ENCODE measurements at regions of chr19 and their contacts with region 1.

Region 1: DNA sequence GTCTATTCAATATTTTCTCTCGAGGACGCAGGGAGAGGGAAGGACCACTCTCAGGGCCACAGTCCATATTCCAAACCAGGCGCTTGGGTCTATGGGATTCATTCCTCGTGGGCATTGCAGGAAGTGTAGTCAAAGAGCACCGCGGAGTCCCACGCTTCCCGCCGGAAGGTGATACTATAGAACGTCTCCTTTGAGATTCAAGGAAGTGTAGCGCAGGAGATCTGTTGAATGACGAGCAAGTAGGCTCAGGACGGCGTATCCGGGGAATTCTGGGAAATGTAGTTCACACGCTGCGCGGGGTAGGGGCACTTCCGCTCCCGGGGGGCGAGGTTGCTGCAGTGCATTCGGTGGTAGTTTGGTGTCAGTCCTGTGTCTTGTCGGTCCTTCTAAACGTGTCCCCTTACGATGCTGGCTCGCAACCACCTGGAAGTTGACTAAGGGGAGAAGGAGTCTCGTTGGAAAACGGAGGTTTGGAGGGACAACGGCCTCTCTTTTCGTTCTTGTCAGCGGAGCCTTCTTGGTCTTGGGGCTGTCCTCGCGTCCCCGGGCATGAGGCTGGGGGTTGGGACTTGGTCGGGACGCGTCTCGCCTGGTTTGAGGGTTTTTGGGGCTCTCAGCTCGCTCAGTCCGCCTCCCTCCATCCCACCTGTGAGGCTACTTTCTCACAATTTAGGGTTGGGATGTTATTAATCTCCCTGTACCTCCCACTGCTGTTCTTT is at the start of gene ZNF284:
- DNase-seq: peak; percentile 84 to 88
- H3K4me3 ChIP-seq: peak within 1 kb of the TSS; percentile 70
- H3K27ac ChIP-seq: peak within 1 kb of the TSS; percentile 17; the same call in 1 of the 2 replicates
- H3K4me1 ChIP-seq: peaks cover 7% of the 10 kb centered on the region; the same call in 1 of the 2 replicates
- H3K27me3 ChIP-seq: no peaks in the 10 kb centered on the region
- CTCF ChIP-seq: no peak
- total RNA-seq, gene ZNF284: 1.9 and 2.0 TPM in 2 replicates

Region 2: DNA sequence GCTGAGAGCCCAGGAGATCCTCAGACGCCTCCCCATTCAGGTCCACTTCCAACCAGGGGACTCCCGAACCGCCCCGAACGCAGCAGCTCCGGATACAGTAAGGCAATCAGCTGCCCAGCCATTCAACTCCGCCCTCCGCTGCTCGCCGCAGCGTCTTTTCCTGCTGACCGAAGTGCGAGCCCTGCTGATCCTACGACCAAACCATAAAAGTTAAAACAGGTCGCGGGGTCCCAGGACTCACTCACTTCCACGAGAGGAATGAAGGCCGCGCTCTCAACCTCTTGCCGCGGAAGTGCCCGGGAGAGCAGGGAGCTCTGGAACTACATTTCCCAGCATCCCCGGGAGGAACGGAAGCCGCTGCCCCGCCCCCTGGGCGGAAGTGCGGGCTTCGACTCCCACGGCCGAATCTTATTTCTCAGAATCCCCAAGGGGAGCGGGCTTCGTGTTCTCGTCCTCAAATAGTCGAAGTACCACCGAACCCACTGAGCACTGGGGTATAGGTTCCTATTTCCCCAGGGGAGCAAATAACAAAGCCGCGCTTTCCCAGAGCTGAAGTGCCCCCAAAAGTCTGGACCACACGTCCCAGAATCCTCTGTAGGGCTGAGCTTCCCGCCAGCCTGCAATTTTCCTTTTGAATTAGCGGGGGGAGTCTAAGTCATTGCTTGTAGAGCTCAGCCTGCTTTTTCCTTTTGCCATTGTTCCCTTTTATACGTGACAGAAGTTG is 136.8 kb before region 1 on chr19 and contains the start of gene ZNF45:
- CTCF ChIA-PET with region 1: no interaction called
- POLR2A ChIA-PET with region 1: interaction called, 10 read pairs
- intact Hi-C with region 1: no loop called
- DNase-seq: peak; percentile 74 to 81
- H3K4me3 ChIP-seq: peak within 1 kb of the TSS; percentile 88
- H3K27ac ChIP-seq: no peak within 1 kb of the TSS
- H3K4me1 ChIP-seq: peaks cover 11% of the 10 kb centered on the region
- H3K27me3 ChIP-seq: peaks cover under 1% of the 10 kb centered on the region; the same call in 1 of the 2 replicates
- CTCF ChIP-seq: no peak
- total RNA-seq, gene ZNF45: 6.9 and 10.3 TPM in 2 replicates

Region 3: DNA sequence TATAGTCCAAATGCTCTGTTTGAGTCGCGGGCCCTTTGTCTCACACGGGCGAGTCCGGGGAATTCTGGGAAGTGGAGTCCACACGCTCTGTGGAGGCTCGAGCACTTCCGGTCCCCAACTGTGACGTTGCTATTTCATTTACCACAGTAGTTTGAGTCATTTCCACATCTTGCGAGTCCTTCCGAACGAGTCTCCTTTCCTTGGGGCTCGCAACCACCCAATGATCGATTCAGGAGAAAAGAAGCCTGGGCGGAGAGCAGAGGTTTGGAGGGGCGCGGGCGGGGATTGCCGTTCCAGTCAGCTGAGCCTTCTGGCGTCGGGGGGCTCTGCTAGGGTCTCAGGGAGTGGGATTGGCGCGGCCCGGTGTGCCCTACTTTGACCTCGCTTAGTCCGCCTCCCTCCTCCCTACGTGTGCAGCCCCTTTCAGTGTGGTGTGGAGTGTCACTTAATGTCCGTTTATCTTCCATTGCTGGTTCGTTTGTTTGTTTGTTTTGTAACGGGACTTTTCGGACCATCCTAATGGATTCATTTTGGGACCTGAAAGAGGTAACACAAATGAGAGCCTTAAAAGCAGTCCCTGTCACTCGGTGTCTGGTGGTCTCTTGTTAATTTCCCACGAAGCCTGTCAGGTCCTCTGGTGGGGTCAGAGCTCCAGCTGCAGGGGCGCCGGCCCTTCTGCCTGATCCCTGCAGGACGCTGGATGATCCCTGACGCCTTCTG is 46.6 kb before region 1 on chr19 and contains the start of gene ZNF222:
- CTCF ChIA-PET with region 1: no interaction called
- POLR2A ChIA-PET with region 1: no interaction called
- intact Hi-C with region 1: no loop called
- DNase-seq: peak; percentile 62 to 77
- H3K4me3 ChIP-seq: peak within 1 kb of the TSS; percentile 84
- H3K27ac ChIP-seq: no peak within 1 kb of the TSS
- H3K4me1 ChIP-seq: peaks cover 13% of the 10 kb centered on the region
- H3K27me3 ChIP-seq: no peaks in the 10 kb centered on the region
- CTCF ChIP-seq: no peak
- total RNA-seq, gene ZNF222: 1.8 and 2.1 TPM in 2 replicates

Region 4: GRCh38 chr19:44141191-44142058 is 69.4 kb after region 1 on chr19 and contains the start of gene ZNF234:
- CTCF ChIA-PET with region 1: interaction called, 13 read pairs
- POLR2A ChIA-PET with region 1: no interaction called
- intact Hi-C with region 1: no loop called
- DNase-seq: peak; percentile 50 to 65
- H3K4me3 ChIP-seq: peak within 1 kb of the TSS; percentile 81
- H3K27ac ChIP-seq: no peak within 1 kb of the TSS
- H3K4me1 ChIP-seq: peaks cover 18% of the 10 kb centered on the region; the same call in 1 of the 2 replicates
- H3K27me3 ChIP-seq: no peaks in the 10 kb centered on the region
- CTCF ChIP-seq: no peak
- total RNA-seq, gene ZNF234: 6.0 and 8.6 TPM in 2 replicates

Measured in PC-9 (cell line).